ENCODE measurements at regions of chr1 and their contacts with region 1.

Region 1: DNA sequence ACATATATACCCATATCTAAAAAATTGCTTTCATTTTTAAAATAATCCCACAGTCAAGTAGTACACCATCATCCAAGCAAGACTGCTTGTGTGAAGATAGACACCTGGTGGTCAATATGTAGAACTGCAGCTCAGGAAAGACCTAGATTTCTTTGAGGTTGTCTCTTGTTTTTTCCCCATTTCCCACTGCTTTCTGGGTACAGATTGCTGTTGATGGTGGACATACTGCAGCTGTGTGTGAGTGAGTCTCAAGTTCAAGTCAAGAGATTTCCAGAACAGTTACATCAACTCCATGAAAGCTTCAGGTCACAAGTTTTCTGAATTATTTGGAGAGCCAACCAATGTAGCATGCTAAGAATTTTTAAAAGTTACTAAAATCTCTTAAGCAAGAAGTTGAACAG is 306.4 kb downstream of the DUSP10 start:
- DNase-seq: no peak

Region 2: DNA sequence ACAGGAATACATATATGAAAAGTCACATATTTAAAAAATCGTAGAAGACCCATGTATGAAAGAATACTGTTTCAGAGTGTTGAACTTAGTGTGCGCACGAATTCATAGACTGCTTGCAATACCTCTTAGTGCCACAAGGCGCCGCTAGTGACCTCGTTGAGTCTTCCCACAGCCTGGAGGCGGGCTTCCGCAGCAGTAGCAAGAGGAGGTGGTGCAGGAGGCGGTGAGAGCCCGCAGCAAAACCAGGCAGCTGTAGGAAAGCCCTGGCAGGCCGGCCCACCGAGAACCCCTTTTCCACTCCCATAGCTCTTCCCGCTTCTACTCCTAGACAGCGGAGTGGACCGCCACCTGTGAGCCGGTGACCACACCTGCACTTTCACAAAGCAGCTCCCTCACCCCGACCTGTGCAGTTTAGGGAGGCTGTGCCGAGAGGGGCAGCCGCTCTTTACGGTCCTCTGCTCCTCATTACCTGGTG is 625.3 kb before region 1 on chr1:
- intact Hi-C with region 1: loop called (anchors 2 kb)
- DNase-seq: peak; percentile 92

Region 3: DNA sequence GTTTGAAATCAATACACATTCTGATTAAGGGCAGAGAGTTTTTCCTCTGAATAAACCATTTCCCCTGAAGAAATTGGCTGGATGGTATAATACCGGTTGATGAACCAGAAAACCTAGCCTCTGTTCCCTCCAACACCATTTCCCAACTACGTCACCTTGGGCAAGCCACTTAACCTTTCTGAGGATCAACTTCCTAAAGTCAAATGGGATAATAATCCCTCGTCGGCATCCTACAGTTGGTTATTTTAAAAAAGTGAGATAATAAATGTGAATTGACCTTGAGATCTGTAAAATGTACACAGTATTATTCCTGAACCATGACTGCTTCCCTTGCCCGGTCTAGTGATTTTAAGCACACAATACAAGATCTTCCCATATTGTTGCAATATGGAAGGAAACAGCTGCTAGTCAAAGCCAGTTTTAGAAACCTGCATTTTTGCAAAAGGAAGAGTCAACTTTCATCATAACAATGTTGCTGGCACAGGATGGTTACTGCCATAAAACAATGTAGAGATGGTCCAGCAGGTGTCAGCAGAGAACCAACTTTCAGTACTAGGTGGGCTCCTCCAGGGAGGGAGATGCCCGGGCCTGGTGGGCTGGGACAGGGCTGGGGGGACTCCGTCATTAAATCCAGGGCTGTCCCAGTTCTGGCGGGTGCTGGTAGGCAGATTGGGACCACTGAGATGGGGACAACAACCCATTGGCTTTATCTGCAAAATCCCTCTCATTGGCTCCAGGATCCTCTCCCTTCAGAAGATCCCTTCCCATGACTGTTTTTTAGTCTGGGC is 561.4 kb before region 1 on chr1:
- intact Hi-C with region 1: loop called (anchors 2 kb)
- DNase-seq: peak; percentile 72

Region 4: DNA sequence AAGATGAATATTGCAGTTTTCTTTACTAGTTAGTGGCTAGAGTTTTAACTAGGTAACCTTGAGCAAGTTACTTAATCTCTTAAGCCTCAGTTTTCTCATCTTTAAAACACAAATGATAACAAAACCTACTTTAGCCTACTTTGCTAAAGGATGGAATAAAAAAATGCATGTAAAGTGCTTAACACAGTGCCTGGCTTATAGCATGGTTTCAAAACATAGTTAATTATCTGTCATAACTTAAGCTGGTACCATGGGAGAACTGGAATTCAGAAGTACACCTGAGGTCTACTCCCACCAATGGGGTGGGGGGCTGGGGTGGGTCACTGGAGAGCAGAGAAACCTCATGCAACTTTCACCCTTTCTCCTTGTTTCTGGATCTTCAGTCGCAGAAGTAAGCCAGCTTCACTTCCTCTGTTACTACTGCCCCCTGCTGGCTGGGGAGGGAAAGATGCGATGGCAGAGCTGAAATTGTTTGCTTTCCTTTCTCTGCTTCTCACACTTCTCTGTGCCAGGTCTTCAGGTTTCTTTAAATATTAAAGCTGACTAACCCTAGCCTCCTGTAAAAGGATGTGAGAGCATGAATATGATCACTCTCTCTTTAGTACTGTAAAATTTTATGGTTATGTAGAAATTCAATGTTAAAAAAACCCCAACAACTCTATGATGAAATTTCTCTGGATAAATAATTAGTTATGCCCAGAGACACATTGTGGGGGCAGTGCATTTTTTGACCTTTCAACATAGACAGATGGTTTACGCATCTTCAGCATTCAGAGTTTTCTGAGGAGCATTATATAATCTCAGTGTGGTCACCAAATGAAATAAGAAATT is 232.1 kb before region 1 on chr1:
- intact Hi-C with region 1: loop called (anchors 5 kb)
- DNase-seq: peak; percentile 89

Region 5: DNA sequence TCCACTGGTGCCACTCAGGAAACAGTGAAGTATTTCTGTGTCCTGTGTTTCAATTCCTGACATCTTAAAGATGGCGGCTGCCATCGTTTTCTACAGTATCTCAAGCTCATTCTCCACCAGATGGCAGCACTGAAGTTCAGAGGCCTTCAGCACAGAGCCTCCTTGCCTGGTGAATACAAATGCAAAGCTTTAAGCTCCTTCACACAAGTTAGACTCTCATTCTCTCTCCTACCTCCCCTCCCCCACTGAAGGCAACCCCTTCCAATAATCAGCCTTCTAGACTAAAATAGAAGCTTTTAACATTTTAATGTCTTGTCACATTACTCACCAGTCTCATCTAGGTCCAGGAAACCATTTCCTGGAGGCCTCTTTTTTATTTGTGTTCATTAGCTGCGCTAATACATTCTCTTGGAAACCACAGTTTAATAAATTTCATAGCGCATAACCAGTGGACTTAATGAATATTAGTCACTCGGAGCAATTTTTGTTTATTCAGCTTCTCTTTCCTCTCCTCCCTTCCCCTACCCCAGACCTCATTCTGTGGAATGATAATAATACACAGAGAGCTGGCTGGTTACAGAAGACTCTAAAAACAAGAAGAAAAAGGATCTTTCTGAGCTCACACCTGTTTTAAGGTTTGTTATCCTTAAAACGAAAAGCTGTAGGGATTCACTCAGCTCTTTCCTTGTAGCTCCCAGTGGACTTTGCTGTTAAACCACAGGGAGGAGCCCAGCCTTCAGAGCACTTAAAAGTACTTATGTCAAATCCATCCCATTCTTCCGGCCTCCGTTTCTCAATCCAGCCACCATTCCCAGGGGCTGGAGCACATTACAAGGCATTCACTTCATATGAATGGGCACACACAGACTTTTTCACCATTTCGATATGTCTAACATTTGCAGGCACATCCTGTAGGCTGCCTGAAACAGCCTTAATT is 171.4 kb before region 1 on chr1:
- intact Hi-C with region 1: loop called (anchors 5 kb)
- DNase-seq: no peak